ENCODE measurements at regions of chr10 and their contacts with region 1.

Region 1: GRCh38 chr10:8365935-8366911 is 311.7 kb downstream of the GATA3 start:
- DNase-seq: peak; percentile 97 to 99
- H3K4me3 ChIP-seq: peak overlapping the region; percentile 32
- H3K4me3 Mint-ChIP-seq: peak overlapping the region; percentile 79
- H3K27ac Mint-ChIP-seq: peak overlapping the region; percentile 99
- H3K4me1 ChIP-seq: peaks cover 29% of the 10 kb centered on the region
- H3K4me1 Mint-ChIP-seq: peaks cover 28% of the 10 kb centered on the region
- H3K27me3 ChIP-seq: no peaks in the 10 kb centered on the region
- H3K27me3 Mint-ChIP-seq: no peaks in the 10 kb centered on the region
- CTCF ChIP-seq: peak; percentile 5 to 32

Region 2: GRCh38 chr10:8053446-8054290 is 312.6 kb before region 1 on chr10:
- CTCF ChIA-PET with region 1: no interaction called
- POLR2A ChIA-PET with region 1: no interaction called
- intact Hi-C with region 1: loop called (anchors 1 kb)
- DNase-seq: peak; percentile 93 to 98
- H3K4me3 ChIP-seq: peak overlapping the region; percentile 68
- H3K4me3 Mint-ChIP-seq: peak overlapping the region; percentile 87
- H3K27ac Mint-ChIP-seq: peak overlapping the region; percentile 87
- H3K4me1 ChIP-seq: peaks cover 27% of the 10 kb centered on the region
- H3K4me1 Mint-ChIP-seq: peaks cover 29% of the 10 kb centered on the region
- H3K27me3 ChIP-seq: no peaks in the 10 kb centered on the region
- H3K27me3 Mint-ChIP-seq: no peaks in the 10 kb centered on the region
- CTCF ChIP-seq: peak; percentile 96 to 98

Region 3: DNA sequence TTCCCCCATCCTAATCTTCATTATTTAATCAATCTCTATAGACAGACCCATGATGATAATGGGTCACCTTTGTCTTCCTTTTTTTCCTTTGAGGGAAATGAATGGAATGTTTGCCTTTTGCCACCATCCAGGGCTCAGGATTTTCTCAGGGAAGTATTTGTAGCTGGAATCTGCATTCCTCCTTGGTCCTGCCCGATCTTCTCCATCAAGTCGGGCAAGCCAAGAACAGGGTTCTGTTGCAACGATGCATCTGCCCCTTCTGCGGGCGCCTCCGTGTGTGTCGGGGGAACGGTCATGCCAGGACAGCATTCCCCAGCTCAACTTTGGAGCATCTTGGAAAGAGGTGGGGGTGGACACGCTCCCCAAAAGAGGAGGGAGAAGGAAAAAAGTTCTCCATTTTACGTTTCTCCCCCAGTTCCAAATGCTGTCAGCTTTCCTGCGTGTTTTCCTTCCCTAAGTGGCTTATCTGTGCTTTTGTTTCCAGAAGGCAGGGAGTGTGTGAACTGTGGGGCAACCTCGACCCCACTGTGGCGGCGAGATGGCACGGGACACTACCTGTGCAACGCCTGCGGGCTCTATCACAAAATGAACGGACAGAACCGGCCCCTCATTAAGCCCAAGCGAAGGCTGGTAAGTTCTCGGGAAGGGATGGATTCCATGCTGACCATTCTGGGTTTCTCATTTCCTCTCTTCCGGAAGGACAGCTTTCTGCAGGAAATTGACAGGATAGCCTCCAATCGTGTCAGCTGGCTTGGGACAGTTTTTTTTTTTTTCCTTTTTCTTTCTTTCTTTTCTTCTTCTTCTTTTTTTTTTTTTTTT is 302.5 kb before region 1 on chr10:
- CTCF ChIA-PET with region 1: no interaction called
- POLR2A ChIA-PET with region 1: no interaction called
- intact Hi-C with region 1: no loop called
- DNase-seq: no peak
- H3K4me3 ChIP-seq: no peak overlapping the region
- H3K4me3 Mint-ChIP-seq: peak overlapping the region; percentile 25
- H3K27ac Mint-ChIP-seq: peak overlapping the region; percentile 73
- H3K4me1 ChIP-seq: peaks cover 33% of the 10 kb centered on the region
- H3K4me1 Mint-ChIP-seq: peaks cover 48% of the 10 kb centered on the region
- H3K27me3 ChIP-seq: no peaks in the 10 kb centered on the region
- H3K27me3 Mint-ChIP-seq: no peaks in the 10 kb centered on the region
- CTCF ChIP-seq: no peak

Region 4: GRCh38 chr10:8193546-8193945 is 172.7 kb before region 1 on chr10:
- CTCF ChIA-PET with region 1: no interaction called
- POLR2A ChIA-PET with region 1: no interaction called
- intact Hi-C with region 1: loop called (anchors 5 kb)
- DNase-seq: no peak
- H3K4me3 ChIP-seq: no peak overlapping the region
- H3K4me3 Mint-ChIP-seq: peak overlapping the region; percentile 32
- H3K27ac Mint-ChIP-seq: peak overlapping the region; percentile 40
- H3K4me1 ChIP-seq: peaks cover 29% of the 10 kb centered on the region
- H3K4me1 Mint-ChIP-seq: peaks cover 10% of the 10 kb centered on the region
- H3K27me3 ChIP-seq: no peaks in the 10 kb centered on the region
- H3K27me3 Mint-ChIP-seq: no peaks in the 10 kb centered on the region
- CTCF ChIP-seq: no peak

Region 5: GRCh38 chr10:8379906-8380832 is 13.9 kb after region 1 on chr10:
- CTCF ChIA-PET with region 1: interaction called, 10 read pairs
- POLR2A ChIA-PET with region 1: interaction called, 10 read pairs
- intact Hi-C with region 1: loop called (anchors 1 kb)
- DNase-seq: peak; percentile 84 to 89
- H3K4me3 ChIP-seq: no peak overlapping the region
- H3K4me3 Mint-ChIP-seq: peak overlapping the region; percentile 62
- H3K27ac Mint-ChIP-seq: peak overlapping the region; percentile 90
- H3K4me1 ChIP-seq: peaks cover 37% of the 10 kb centered on the region
- H3K4me1 Mint-ChIP-seq: peaks cover 35% of the 10 kb centered on the region
- H3K27me3 ChIP-seq: no peaks in the 10 kb centered on the region
- H3K27me3 Mint-ChIP-seq: no peaks in the 10 kb centered on the region
- CTCF ChIP-seq: no peak

Region 6: GRCh38 chr10:8431536-8431935 is 65.3 kb after region 1 on chr10:
- CTCF ChIA-PET with region 1: no interaction called
- POLR2A ChIA-PET with region 1: no interaction called
- intact Hi-C with region 1: loop called (anchors 1 kb)
- DNase-seq: peak in 1 of 2 experiments; percentile 51
- H3K4me3 ChIP-seq: no peak overlapping the region
- H3K4me3 Mint-ChIP-seq: no peak overlapping the region
- H3K27ac Mint-ChIP-seq: no peak overlapping the region
- H3K4me1 ChIP-seq: peaks cover 20% of the 10 kb centered on the region
- H3K4me1 Mint-ChIP-seq: peaks cover 16% of the 10 kb centered on the region
- H3K27me3 ChIP-seq: no peaks in the 10 kb centered on the region
- H3K27me3 Mint-ChIP-seq: no peaks in the 10 kb centered on the region
- CTCF ChIP-seq: no peak

Region 7: GRCh38 chr10:8487346-8487745 is 121.1 kb after region 1 on chr10:
- CTCF ChIA-PET with region 1: no interaction called
- POLR2A ChIA-PET with region 1: no interaction called
- intact Hi-C with region 1: no loop called
- DNase-seq: no peak
- H3K4me3 ChIP-seq: no peak overlapping the region
- H3K4me3 Mint-ChIP-seq: no peak overlapping the region
- H3K27ac Mint-ChIP-seq: no peak overlapping the region
- H3K4me1 ChIP-seq: no peaks in the 10 kb centered on the region
- H3K4me1 Mint-ChIP-seq: peaks cover 3% of the 10 kb centered on the region
- H3K27me3 ChIP-seq: no peaks in the 10 kb centered on the region
- H3K27me3 Mint-ChIP-seq: no peaks in the 10 kb centered on the region
- CTCF ChIP-seq: no peak

Region 8: GRCh38 chr10:8616166-8616565 is 249.9 kb after region 1 on chr10:
- CTCF ChIA-PET with region 1: no interaction called
- POLR2A ChIA-PET with region 1: no interaction called
- intact Hi-C with region 1: loop called (anchors 5 kb)
- DNase-seq: peak; percentile 61 to 65
- H3K4me3 ChIP-seq: no peak overlapping the region
- H3K4me3 Mint-ChIP-seq: peak overlapping the region; percentile 12
- H3K27ac Mint-ChIP-seq: peak overlapping the region; percentile 40
- H3K4me1 ChIP-seq: peaks cover 23% of the 10 kb centered on the region
- H3K4me1 Mint-ChIP-seq: peaks cover 7% of the 10 kb centered on the region
- H3K27me3 ChIP-seq: no peaks in the 10 kb centered on the region
- H3K27me3 Mint-ChIP-seq: no peaks in the 10 kb centered on the region
- CTCF ChIP-seq: no peak

Measured in Caco-2 (cell line).